ENCODE measurements at regions of chr15 and their contacts with region 1.

Region 1: DNA sequence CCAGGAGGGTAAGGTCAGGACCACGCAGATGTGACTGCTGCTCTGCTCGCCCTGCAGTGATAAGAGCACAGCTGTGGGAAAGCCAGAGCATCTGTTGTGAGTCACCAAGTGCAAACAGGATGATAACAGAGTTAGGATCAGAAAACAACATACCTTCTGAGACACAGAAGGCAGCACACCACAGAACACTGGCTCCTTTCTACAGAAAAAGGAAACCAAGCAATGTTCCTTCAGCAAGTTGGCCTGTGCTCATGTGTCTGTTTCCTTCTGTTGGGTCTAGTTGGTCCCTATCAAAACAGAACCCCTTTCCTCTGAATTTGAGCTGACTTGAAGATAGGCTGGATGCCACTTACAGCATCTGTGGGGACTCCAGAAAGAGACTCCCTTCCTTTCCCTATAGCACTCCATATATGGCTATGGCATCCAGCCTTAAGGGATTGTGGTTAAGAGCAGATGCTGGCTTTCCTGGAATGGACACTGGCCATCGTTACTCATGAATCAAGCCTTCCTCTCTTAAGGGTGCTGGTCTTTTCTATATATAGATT is 440.7 kb upstream of the THBS1 start:
- DNase-seq: peak; percentile 100
- H3K4me3 ChIP-seq: no peak overlapping the region
- H3K27ac ChIP-seq: peak overlapping the region; percentile 96
- H3K4me1 ChIP-seq: peaks cover 34% of the 10 kb centered on the region
- H3K27me3 ChIP-seq: no peaks in the 10 kb centered on the region
- CTCF ChIP-seq: no peak
- POLR2A ChIP-seq: peak; percentile 90

Region 2: GRCh38 chr15:38817427-38818156 is 322.5 kb before region 1 on chr15:
- CTCF ChIA-PET with region 1: no interaction called
- POLR2A ChIA-PET with region 1: no interaction called
- dilution Hi-C with region 1: no loop called
- intact Hi-C with region 1: loop called (anchors 1 kb)
- DNase-seq: peak; percentile 86
- H3K4me3 ChIP-seq: no peak overlapping the region
- H3K27ac ChIP-seq: peak overlapping the region; percentile 36
- H3K4me1 ChIP-seq: peaks cover 17% of the 10 kb centered on the region
- H3K27me3 ChIP-seq: no peaks in the 10 kb centered on the region
- CTCF ChIP-seq: peak; percentile 98 to 99
- POLR2A ChIP-seq: no peak

Region 3: GRCh38 chr15:38843736-38844590 is 296.2 kb before region 1 on chr15:
- CTCF ChIA-PET with region 1: no interaction called
- POLR2A ChIA-PET with region 1: no interaction called
- dilution Hi-C with region 1: loop called (anchors 25 kb)
- intact Hi-C with region 1: loop called (anchors 1 kb)
- DNase-seq: peak; percentile 95
- H3K4me3 ChIP-seq: peak overlapping the region in 1 of 3 experiments; percentile 15
- H3K27ac ChIP-seq: peak overlapping the region; percentile 98
- H3K4me1 ChIP-seq: peaks cover 41% of the 10 kb centered on the region
- H3K27me3 ChIP-seq: no peaks in the 10 kb centered on the region
- CTCF ChIP-seq: no peak
- POLR2A ChIP-seq: peak; percentile 61

Region 4: DNA sequence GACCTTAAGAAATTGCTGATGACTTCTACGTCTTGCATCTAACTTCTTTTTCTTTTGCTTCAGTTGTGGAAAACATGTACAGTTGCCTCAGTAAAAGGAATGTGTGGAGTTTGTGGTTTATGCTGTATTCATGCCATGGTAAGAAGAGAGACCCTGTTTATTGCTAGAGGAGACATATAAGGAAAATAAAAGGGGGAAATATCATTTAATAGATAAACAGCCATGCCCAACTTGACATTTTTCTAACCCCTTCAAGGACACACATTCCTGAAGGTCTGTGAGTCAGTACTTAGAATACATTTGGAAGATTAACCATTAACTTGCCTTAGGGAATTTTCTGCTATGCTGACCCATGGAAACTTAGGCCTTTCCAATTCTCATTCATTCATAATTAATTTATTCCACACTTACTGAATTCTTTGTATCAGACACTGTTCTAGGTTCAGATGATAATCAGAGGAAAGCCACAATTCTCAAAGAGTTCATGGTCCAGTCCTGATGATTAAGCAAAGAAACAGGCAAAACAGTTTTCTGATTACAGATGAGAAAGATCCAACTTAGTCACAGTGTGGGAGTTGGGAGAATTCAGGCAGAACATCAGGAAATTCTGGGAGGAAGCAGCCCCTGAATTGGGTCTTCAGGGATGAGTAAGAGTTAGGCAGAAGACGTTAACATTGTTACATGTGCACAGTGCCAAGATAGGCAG is 245.7 kb before region 1 on chr15:
- CTCF ChIA-PET with region 1: no interaction called
- POLR2A ChIA-PET with region 1: no interaction called
- dilution Hi-C with region 1: loop called (anchors 10 kb)
- intact Hi-C with region 1: loop called (anchors 1 kb)
- DNase-seq: peak; percentile 91
- H3K4me3 ChIP-seq: no peak overlapping the region
- H3K27ac ChIP-seq: peak overlapping the region; percentile 92
- H3K4me1 ChIP-seq: peaks cover 49% of the 10 kb centered on the region
- H3K27me3 ChIP-seq: no peaks in the 10 kb centered on the region
- CTCF ChIP-seq: no peak
- POLR2A ChIP-seq: no peak

Region 5: DNA sequence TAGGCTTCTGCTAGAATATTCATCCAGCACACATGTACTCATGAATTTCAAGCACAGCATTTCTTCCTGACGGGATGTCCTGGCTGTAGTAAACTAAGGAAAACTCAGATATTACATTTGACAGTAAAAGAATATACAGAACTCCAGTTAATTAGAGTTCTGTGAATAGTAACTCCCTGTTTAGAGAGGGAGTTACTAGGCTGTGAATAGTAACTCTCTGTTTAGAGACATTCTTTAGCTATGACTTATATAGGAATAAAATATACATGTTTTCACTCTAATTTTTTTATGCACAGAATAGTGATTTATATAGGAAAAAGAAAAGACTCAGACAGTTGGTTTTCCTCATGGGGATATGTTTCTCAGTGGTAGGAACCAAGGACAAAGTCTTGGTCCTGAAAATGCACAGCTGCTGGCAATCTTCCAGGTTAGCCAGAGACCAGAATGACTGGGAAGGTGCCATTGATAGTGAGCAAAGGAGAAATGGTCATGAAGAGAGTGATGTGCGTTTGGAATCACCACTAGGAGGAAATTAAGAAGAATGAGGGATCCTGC is 39.9 kb before region 1 on chr15:
- CTCF ChIA-PET with region 1: no interaction called
- POLR2A ChIA-PET with region 1: no interaction called
- dilution Hi-C with region 1: no loop called
- intact Hi-C with region 1: no loop called
- DNase-seq: no peak
- H3K4me3 ChIP-seq: no peak overlapping the region
- H3K27ac ChIP-seq: no peak overlapping the region
- H3K4me1 ChIP-seq: peaks cover 28% of the 10 kb centered on the region
- H3K27me3 ChIP-seq: no peaks in the 10 kb centered on the region
- CTCF ChIP-seq: no peak
- POLR2A ChIP-seq: no peak

Region 6: GRCh38 chr15:39230205-39230907 is 90.2 kb after region 1 on chr15:
- CTCF ChIA-PET with region 1: no interaction called
- POLR2A ChIA-PET with region 1: no interaction called
- dilution Hi-C with region 1: no loop called
- intact Hi-C with region 1: loop called (anchors 1 kb)
- DNase-seq: peak; percentile 100
- H3K4me3 ChIP-seq: no peak overlapping the region
- H3K27ac ChIP-seq: peak overlapping the region; percentile 93
- H3K4me1 ChIP-seq: peaks cover 49% of the 10 kb centered on the region
- H3K27me3 ChIP-seq: no peaks in the 10 kb centered on the region
- CTCF ChIP-seq: no peak
- POLR2A ChIP-seq: no peak

Region 7: DNA sequence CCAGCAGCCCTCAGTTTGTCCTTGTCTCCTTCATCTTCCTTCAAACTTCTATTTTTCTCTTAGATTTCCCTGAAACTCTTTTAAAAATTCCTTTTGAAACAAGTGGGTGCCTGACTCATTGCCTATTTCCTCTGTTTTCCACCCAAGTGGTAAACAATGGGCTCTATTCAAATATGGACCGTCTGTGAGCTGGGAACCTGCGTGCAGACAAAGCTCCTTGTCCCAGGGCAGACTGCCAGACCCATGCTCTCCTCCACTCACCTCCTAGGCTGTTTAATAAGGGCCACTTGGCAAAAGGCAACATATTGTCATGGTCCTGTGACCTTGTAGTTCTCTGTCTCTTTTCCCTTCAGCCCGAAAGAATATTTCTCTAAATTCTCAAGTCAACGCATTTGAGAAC is 108.1 kb after region 1 on chr15:
- CTCF ChIA-PET with region 1: no interaction called
- POLR2A ChIA-PET with region 1: no interaction called
- dilution Hi-C with region 1: no loop called
- intact Hi-C with region 1: loop called (anchors 1 kb)
- DNase-seq: peak; percentile 99
- H3K4me3 ChIP-seq: peak overlapping the region in 1 of 3 experiments; percentile 0
- H3K27ac ChIP-seq: peak overlapping the region; percentile 98
- H3K4me1 ChIP-seq: peaks cover 72% of the 10 kb centered on the region
- H3K27me3 ChIP-seq: no peaks in the 10 kb centered on the region
- CTCF ChIP-seq: no peak
- POLR2A ChIP-seq: no peak